ENCODE measurements at regions of chr7 and their contacts with region 1.

Region 1: GRCh38 chr7:7968543-7969305 is at the start of gene GLCCI1:
- DNase-seq: peak; percentile 97
- H3K4me3 Mint-ChIP-seq: peak within 1 kb of the TSS; percentile 94
- H3K27ac Mint-ChIP-seq: peak within 1 kb of the TSS; percentile 95
- H3K4me1 Mint-ChIP-seq: peaks cover 24% of the 10 kb centered on the region
- H3K27me3 Mint-ChIP-seq: no peaks in the 10 kb centered on the region
- total RNA-seq, gene GLCCI1: 23.8 and 27.9 TPM in 2 replicates

Region 2: GRCh38 chr7:7157177-7157886 is 811.4 kb before region 1 on chr7:
- intact Hi-C with region 1: loop called (anchors 10 kb)
- DNase-seq: peak; percentile 72
- H3K4me3 Mint-ChIP-seq: peak overlapping the region; percentile 79
- H3K27ac Mint-ChIP-seq: peak overlapping the region; percentile 80
- H3K4me1 Mint-ChIP-seq: peaks cover 49% of the 10 kb centered on the region
- H3K27me3 Mint-ChIP-seq: no peaks in the 10 kb centered on the region

Region 3: DNA sequence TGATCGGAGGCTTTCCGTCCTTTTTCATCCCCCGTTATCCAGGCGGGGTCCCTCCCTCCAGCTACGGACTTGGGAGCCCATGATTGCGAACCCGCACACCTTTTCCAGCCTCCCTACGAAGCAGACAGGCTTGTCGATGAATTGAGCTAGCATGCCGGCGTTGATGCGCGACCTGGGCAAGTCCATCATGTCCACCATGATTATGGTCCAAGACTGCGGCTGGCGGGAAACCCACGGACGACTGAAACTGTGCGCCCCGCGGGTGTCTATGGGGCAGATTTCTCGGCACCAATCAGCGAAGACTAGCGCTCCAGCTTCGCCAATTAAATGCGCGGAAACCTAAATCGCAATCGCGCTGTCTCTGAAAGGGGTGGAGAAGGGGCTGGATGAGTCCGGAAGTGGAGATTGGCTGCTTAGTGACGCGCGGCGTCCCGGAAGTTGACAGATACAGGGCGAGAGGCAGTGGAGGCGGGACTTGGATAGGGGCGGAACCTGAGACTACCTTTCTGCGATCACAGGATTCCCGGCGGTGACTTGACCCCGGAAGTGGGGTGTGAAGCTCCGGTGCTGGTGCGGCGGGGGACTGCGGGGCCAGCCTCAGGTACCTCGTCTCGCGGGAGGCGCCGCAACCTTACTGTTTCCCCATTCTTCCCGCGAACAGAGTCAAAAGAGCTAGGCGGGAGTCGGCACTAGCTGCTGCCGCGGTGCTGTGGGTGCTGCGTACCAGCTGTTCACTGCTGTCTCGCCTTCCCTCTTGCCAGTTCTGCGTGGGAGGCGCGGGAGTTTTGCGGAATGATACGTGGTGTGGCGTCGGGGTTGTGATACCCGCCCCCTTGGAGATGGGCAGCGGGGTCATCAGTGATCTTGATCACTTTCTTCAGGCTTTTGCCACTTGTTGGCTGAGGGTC is 328.2 kb before region 1 on chr7 and contains the start of gene UMAD1:
- intact Hi-C with region 1: loop called (anchors 1 kb)
- DNase-seq: peak; percentile 99
- H3K4me3 Mint-ChIP-seq: peak within 1 kb of the TSS; percentile 94
- H3K27ac Mint-ChIP-seq: peak within 1 kb of the TSS; percentile 99
- H3K4me1 Mint-ChIP-seq: peaks cover 31% of the 10 kb centered on the region
- H3K27me3 Mint-ChIP-seq: no peaks in the 10 kb centered on the region
- total RNA-seq, gene UMAD1: 16.0 and 18.9 TPM in 2 replicates

Region 4: GRCh38 chr7:7761340-7761980 is 207.3 kb before region 1 on chr7:
- intact Hi-C with region 1: loop called (anchors 2 kb)
- DNase-seq: no peak
- H3K4me3 Mint-ChIP-seq: peak overlapping the region; percentile 86
- H3K27ac Mint-ChIP-seq: peak overlapping the region; percentile 83
- H3K4me1 Mint-ChIP-seq: peaks cover 38% of the 10 kb centered on the region
- H3K27me3 Mint-ChIP-seq: no peaks in the 10 kb centered on the region

Region 5: DNA sequence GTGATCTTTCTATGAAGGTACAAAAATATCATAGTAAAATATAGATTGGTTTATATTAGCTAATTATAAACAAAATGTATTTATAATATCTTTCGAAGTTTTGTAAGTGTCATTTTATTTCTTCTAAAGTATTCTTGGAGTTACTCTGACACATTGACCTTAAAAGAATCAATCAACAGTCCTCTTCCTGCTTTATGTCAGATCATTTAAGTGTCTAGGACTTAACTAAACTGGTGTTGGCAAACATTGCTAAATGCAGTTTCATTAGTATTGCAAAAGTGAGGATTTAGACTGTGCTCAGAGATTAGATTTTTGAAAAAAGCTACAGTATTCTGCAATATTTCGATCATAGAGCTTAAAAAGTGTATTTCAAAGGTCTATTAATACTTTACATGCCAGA is 10.1 kb after region 1 on chr7:
- intact Hi-C with region 1: loop called (anchors 1 kb)
- DNase-seq: no peak
- H3K4me3 Mint-ChIP-seq: no peak overlapping the region
- H3K27ac Mint-ChIP-seq: no peak overlapping the region
- H3K4me1 Mint-ChIP-seq: peaks cover 34% of the 10 kb centered on the region
- H3K27me3 Mint-ChIP-seq: no peaks in the 10 kb centered on the region

Region 6: DNA sequence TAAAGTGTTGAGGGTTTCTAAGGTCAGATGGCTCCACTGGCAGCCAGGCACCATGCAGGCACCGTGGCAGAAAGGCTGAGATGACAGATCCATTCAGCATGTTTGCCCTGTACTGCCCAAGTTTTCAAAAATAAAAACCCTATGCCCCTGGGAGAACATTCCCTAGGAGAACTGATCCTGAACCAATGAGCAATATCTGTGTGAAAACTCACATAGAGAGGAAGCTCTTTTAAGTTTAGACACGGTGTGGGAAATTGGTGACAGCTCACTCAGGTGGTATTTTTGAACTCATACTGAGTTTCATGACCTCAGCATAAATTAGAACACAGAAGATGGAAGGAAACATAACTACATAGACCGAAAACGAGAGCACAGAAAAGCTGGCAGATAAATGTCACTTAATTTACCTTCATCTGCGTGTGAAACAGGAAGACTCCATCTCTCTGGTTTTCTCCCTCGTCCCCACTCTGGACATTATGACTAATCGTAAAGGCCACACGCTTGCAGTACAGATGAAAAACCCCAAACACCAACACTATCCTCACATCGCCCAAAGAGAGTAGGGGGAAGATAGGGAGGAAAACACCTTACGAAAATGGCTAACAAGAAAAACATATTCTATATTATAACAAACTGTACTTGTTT is 165.5 kb after region 1 on chr7:
- intact Hi-C with region 1: loop called (anchors 1 kb)
- DNase-seq: peak; percentile 30
- H3K4me3 Mint-ChIP-seq: peak overlapping the region; percentile 1
- H3K27ac Mint-ChIP-seq: peak overlapping the region; percentile 87
- H3K4me1 Mint-ChIP-seq: peaks cover 61% of the 10 kb centered on the region
- H3K27me3 Mint-ChIP-seq: no peaks in the 10 kb centered on the region

Region 7: GRCh38 chr7:8201846-8202441 is 233.2 kb after region 1 on chr7:
- intact Hi-C with region 1: loop called (anchors 2 kb)
- DNase-seq: no peak
- H3K4me3 Mint-ChIP-seq: no peak overlapping the region
- H3K27ac Mint-ChIP-seq: peak overlapping the region; percentile 55
- H3K4me1 Mint-ChIP-seq: peaks cover 70% of the 10 kb centered on the region
- H3K27me3 Mint-ChIP-seq: peaks cover 6% of the 10 kb centered on the region

Region 8: DNA sequence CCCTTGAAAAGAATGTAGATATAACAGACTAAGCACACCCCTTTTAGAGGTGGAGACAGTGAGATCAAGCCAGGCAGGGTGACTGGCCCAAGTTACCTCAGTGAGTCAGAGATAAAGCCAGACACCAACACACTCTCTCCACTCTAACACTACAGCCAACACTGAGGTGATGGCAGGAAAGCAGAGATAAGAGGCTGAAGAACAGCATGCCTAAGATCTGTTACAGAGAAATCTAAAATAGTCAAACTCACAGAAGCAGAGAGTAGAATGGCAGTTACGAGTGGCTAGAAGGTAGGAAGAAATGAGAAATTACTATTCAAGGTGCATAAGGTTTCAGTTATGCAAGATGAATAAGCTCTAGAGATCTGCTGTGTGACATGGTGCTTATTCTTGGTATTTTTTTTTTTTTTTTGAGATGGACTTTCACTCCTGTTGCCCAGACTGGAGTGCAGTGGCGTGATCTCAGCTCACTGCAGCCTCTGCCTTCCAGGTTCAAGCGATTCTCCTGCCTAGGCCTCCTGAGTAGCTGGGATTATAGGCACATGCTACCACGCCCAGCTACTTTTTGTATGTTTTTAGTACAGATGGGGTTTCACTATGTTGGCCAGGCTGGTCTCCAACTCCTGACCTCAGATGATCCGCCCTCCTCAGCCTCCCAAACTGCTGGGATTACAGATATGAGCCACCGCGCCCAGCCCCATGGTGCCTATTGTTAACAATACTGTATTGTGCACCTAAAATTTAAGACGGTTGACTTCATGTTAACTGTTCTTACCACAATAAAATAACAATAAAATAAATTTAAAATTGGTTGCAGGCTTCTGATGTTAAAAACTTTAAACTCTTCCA is 264.5 kb after region 1 on chr7:
- intact Hi-C with region 1: no loop called
- DNase-seq: no peak
- H3K4me3 Mint-ChIP-seq: no peak overlapping the region
- H3K27ac Mint-ChIP-seq: peak overlapping the region; percentile 30
- H3K4me1 Mint-ChIP-seq: peaks cover 14% of the 10 kb centered on the region
- H3K27me3 Mint-ChIP-seq: peaks cover 8% of the 10 kb centered on the region

Measured in activated T-helper 2 cell treated with anti-CD3 and anti-CD28 coated beads, Interferon-gamma antibody, Interleukin-2, Interleukin-4, amounts not matched to agents 10 μg/mL and 5 μg/mL and 100 μg/mL, durations not matched to agents 14 hours and 24 hours and 36 hours (primary cell).